ENCODE measurements at regions of chr12 and their contacts with region 1.

Region 1: DNA sequence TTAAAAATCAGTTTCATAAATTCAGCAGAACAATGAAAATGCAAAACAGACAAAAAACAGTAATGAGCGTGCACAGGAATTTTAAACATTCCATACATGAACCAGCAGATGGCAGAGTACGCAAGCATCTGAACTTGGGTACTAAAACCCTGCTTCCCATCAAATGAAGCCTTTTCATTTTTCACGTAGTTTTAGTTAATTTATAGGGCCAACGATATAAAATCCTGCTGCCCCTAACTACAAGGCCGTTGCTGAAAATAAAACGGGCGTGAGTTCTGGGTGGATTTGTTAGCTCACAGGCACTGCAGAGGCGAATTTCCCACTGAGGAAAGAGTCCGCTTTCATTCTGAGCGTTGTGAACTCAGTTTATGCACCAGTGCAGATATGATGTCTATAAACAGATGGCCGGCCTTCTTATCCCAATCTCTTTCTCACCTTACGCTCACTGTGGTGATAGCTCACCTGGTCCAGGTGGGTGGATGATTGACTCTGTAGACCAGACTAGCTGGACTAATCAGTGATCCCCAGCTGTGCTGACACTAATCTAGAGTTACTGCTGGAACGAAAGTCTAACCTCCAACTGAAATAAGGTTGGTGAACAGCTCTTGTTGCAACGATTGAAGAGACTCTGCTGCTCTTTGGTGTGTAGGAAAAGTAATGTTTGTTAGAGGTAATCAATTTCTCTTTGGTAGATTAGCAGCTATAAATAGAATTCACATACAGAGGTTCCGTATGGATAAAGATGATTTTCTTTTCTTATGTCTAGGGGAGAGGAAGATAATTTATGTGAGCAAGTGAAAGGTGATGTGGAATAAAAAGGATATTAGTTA is 89.2 kb downstream of the PDZRN4 start:
- DNase-seq: peak; percentile 57
- ATAC-seq: peak; percentile 50
- H3K4me3 ChIP-seq: no peak overlapping the region
- H3K27ac ChIP-seq: no peak overlapping the region
- H3K4me1 ChIP-seq: no peaks in the 10 kb centered on the region
- H3K27me3 ChIP-seq: peaks cover 20% of the 10 kb centered on the region; the same call in 1 of the 2 replicates
- CTCF ChIP-seq: peak; percentile 85

Region 2: GRCh38 chr12:41151793-41152192 is 125.5 kb before region 1 on chr12:
- CTCF ChIA-PET with region 1: no interaction called
- POLR2A ChIA-PET with region 1: no interaction called
- intact Hi-C with region 1: no loop called
- DNase-seq: peak; percentile 61
- ATAC-seq: 0 out of 2 replicates have a peak, but pooled peaks have one; percentile 22
- H3K4me3 ChIP-seq: no peak overlapping the region
- H3K27ac ChIP-seq: no peak overlapping the region
- H3K4me1 ChIP-seq: no peaks in the 10 kb centered on the region
- H3K27me3 ChIP-seq: no peaks in the 10 kb centered on the region
- CTCF ChIP-seq: no peak

Region 3: GRCh38 chr12:41424651-41425050 is 147.3 kb after region 1 on chr12:
- CTCF ChIA-PET with region 1: no interaction called
- POLR2A ChIA-PET with region 1: no interaction called
- intact Hi-C with region 1: loop called (anchors 10 kb)
- DNase-seq: no peak
- ATAC-seq: peak; percentile 81
- H3K4me3 ChIP-seq: no peak overlapping the region
- H3K27ac ChIP-seq: peak overlapping the region; percentile 27
- H3K4me1 ChIP-seq: no peaks in the 10 kb centered on the region
- H3K27me3 ChIP-seq: no peaks in the 10 kb centered on the region
- CTCF ChIP-seq: no peak

Region 4: GRCh38 chr12:41564816-41565215 is 287.5 kb after region 1 on chr12:
- CTCF ChIA-PET with region 1: no interaction called
- POLR2A ChIA-PET with region 1: no interaction called
- intact Hi-C with region 1: loop called (anchors 1 kb)
- DNase-seq: peak; percentile 26
- ATAC-seq: peak; percentile 33; the same call in 1 of the 2 replicates
- H3K4me3 ChIP-seq: no peak overlapping the region
- H3K27ac ChIP-seq: no peak overlapping the region
- H3K4me1 ChIP-seq: no peaks in the 10 kb centered on the region
- H3K27me3 ChIP-seq: peaks cover 9% of the 10 kb centered on the region; the same call in 1 of the 2 replicates
- CTCF ChIP-seq: peak; percentile 47

Region 5: GRCh38 chr12:41663598-41664258 is 386.4 kb after region 1 on chr12:
- CTCF ChIA-PET with region 1: no interaction called
- POLR2A ChIA-PET with region 1: no interaction called
- intact Hi-C with region 1: loop called (anchors 1 kb)
- DNase-seq: peak; percentile 53
- ATAC-seq: peak; percentile 70
- H3K4me3 ChIP-seq: no peak overlapping the region
- H3K27ac ChIP-seq: no peak overlapping the region
- H3K4me1 ChIP-seq: no peaks in the 10 kb centered on the region
- H3K27me3 ChIP-seq: 0 out of 2 replicates have a peak, but pooled peaks cover 6% of the 10 kb centered on the region
- CTCF ChIP-seq: peak; percentile 62